ENCODE measurements at regions of chr6 and their contacts with region 1.

Region 1: DNA sequence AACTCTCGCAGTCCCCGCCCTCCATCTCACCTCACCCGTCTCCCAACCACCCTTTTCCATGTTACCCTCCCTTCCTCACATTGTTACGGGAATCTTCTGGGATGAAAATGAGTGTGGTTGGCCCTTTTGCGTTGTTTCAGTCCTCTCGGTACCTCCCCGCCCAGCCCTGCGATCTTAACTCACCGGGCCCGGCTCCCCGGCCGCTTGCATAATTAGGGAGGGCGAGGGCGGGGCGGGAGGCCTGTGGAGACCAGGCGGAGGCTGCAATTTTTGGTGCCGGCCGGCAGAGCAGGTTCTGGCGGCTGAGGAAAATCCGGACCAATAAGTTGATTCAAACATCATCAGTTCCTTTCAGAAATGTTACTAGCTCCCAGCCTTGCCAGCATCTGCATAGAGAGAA is 25.2 kb downstream of the TFAP2B start:
- DNase-seq: no peak
- H3K4me3 Mint-ChIP-seq: no peak overlapping the region
- H3K27ac Mint-ChIP-seq: no peak overlapping the region
- H3K4me1 Mint-ChIP-seq: no peaks in the 10 kb centered on the region
- H3K27me3 Mint-ChIP-seq: peaks cover 89% of the 10 kb centered on the region

Region 2: GRCh38 chr6:50724381-50725124 is 119.3 kb before region 1 on chr6:
- intact Hi-C with region 1: loop called (anchors 2 kb)
- DNase-seq: no peak
- H3K4me3 Mint-ChIP-seq: no peak overlapping the region
- H3K27ac Mint-ChIP-seq: no peak overlapping the region
- H3K4me1 Mint-ChIP-seq: peaks cover 5% of the 10 kb centered on the region
- H3K27me3 Mint-ChIP-seq: peaks cover 45% of the 10 kb centered on the region

Region 3: DNA sequence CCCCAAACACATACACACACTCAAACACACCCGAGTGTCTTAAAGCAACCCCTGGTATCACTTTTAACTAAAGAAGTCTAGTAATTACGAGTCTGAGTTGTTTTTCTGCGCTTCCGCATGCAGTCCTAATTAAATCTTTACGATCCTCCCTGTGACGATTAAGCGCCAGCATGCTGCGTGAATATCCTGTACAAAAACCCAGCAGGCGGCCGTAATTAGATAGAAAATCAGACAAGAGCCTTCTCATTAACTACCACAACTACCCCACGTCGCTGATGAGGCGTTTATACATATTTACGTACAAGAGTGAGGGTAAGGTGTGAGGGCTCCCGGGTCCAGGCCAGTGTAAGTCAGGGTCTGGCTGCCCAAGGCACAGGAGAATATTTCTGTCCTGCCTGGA is 17.0 kb before region 1 on chr6:
- intact Hi-C with region 1: loop called (anchors 2 kb)
- DNase-seq: no peak
- H3K4me3 Mint-ChIP-seq: no peak overlapping the region
- H3K27ac Mint-ChIP-seq: no peak overlapping the region
- H3K4me1 Mint-ChIP-seq: no peaks in the 10 kb centered on the region
- H3K27me3 Mint-ChIP-seq: peaks cover 73% of the 10 kb centered on the region

Measured in activated T-helper 2 cell treated with anti-CD3 and anti-CD28 coated beads, Interferon-gamma antibody, Interleukin-2, Interleukin-4, amounts not matched to agents 10 μg/mL and 5 μg/mL and 100 μg/mL, durations not matched to agents 14 hours and 24 hours and 36 hours (primary cell).